Heart left ventricle (tissue), 16 donors: ENCODE measurements at regions of chr2 and their contacts with region 1.

Region 1: DNA sequence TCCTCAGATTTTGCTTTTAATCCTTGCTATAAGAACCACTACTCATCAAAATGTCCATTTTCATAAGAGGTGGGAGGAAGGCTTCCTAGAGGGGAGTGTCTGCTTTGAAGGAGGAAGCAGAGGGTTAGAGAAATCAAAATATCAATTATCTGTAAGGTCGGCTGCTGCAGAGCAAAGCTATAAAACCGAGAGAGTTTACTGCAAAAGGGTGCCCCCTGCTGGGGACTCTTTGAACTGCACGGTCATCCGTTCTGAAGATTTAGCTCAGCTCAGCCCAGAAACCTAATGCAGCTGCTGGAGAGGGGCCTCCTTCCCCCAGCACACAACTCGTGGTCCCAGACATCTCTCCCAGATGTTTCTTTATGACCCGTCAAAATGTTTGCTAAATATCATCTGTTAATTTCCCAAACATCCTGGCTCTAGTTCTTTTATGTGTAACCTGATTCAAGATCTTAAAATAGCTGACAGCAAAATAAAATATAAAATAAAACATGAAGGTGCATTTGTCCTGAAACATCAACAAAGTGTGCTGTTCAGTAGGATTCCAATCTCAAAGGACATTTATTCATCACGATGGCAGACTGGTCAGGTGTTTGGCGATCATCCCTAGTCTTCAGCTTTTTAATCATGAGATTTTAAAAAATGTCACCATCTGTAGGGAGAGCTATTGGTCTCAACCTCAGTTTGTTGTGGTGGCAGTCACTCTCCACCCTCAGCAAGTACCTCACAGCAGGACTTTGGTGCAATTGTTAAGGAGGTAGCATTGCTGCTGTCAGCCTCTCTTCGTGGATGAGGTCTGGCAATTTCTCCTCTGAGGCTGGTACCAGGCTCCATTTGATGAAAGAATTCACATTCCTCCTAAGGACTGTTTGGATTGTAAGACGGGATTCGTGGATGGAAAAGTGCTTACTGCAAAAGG is 185.9 kb downstream of the MTX2 start:
- DNase-seq: peak; percentile 71 to 85 (median 78)
- ATAC-seq: peak; percentile 42 to 55 (median 46)
- H3K4me3 ChIP-seq: no peak overlapping the region
- H3K27ac ChIP-seq: peak overlapping the region in 11 of 12 donors; percentile 11 to 61 (median 27)
- H3K4me1 ChIP-seq: peaks cover 0 to 20% (median 10%) of the 10 kb centered on the region in 12 donors
- H3K27me3 ChIP-seq: peaks cover 0 to 25% (median 0%) of the 10 kb centered on the region in 9 donors
- CTCF ChIP-seq: peak; percentile 89 to 97 (median 94)
- POLR2A ChIP-seq: no peak

Region 2: DNA sequence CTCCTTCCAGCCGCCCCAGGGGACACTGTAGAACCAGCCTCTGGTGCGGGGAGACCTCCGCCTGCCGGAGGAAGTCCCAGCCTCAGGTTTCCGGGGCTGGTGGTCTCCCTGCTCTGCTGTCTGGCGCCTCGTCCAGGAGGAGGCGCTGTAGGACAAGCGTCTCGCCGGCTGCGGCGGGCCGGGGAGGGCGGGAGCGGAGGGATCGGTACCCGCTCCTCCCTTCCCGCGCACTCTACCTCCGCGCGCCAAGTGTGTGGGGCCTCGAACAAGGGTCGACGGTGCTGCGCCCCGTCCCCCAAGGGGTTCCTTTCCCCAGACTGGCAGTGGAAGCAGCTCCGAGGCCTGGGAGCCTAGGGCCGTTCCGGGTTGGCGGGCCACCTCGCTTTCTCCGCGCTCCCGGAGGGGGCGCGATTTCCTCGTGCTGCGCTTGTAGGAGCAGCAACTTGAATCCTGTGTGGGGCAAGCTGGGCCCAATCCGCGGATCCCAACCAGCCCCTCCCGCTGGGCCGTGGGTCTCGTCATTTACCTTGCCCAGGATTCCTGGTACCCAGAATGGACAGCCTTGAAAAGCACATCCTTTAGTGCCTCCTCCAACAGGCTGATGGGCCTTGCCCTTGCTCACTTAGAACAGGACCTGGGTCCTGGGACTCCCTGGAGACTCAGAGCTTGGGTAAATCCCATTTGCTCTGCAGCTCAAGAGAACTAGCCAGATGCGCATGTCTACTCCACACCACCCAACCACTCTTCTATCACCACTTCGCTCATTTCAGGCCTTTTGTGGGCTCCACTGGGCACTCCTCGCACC is 314.4 kb before region 1 on chr2:
- intact Hi-C with region 1: loop called (anchors 1 to 5 kb)
- DNase-seq: peak; percentile 64 to 85 (median 70)
- ATAC-seq: peak; percentile 80 to 97 (median 94)
- H3K4me3 ChIP-seq: peak overlapping the region; percentile 1 to 69 (median 52)
- H3K27ac ChIP-seq: peak overlapping the region in 5 of 12 donors; percentile 32 to 68 (median 56)
- H3K4me1 ChIP-seq: peaks cover 0 to 30% (median 14%) of the 10 kb centered on the region in 12 donors
- H3K27me3 ChIP-seq: peaks cover 31 to 97% (median 66%) of the 10 kb centered on the region in 9 donors
- CTCF ChIP-seq: peak; percentile 68 to 98 (median 92)
- POLR2A ChIP-seq: no peak

Region 3: DNA sequence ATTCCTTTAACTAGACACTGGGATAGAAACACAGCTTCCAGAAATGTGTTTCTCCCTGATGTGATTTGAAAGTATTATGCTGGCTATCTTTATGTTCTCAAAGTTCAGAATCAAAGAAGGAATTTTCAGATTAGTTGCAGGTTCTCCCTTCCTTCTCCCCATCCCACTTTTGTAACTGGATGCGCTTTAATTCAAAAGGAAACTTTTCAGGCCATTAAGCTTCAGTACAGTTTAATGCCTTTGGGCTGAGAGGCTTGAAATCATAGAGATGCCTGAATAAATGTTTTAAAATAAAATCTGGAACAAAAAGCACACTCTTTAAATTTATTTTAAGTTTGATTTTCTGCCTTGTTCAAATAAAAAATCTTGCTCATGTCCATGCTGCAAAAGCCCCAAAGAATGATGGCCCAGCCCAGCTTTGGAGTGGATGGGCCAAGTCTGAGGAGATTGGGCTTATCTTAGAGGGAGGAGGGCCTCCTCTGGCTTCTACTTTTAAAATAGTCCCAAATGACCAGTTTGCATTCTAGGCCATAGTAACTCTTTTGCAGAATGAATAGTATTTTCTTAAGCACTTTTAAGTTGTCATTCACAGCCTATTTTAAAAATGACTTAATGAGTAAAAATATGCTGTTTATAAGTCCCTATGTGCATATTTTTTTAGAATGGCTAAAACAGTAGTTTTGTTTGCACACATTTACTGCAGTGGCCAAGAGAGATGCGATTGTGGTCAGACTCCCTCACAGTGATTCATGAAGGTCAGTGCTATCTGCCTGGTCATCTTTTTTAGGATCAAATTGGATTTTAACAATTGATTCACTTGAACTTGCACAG is 56.7 kb before region 1 on chr2:
- intact Hi-C with region 1: no loop called
- DNase-seq: no peak
- ATAC-seq: no peak
- H3K4me3 ChIP-seq: no peak overlapping the region
- H3K27ac ChIP-seq: no peak overlapping the region
- H3K4me1 ChIP-seq: no peaks in the 10 kb centered on the region
- H3K27me3 ChIP-seq: no peaks in the 10 kb centered on the region
- CTCF ChIP-seq: no peak
- POLR2A ChIP-seq: no peak

Region 4: GRCh38 chr2:176534798-176535466 is 79.8 kb after region 1 on chr2:
- intact Hi-C with region 1: loop called in 1 of 10 experiments (anchors 5 kb)
- DNase-seq: no peak
- ATAC-seq: peak in 2 of 4 donors; percentile 34 to 81
- H3K4me3 ChIP-seq: no peak overlapping the region
- H3K27ac ChIP-seq: no peak overlapping the region
- H3K4me1 ChIP-seq: peaks cover 0 to 2% (median 0%) of the 10 kb centered on the region in 12 donors
- H3K27me3 ChIP-seq: peaks cover 0 to 6% (median 0%) of the 10 kb centered on the region in 9 donors
- CTCF ChIP-seq: no peak
- POLR2A ChIP-seq: no peak

Region 5: DNA sequence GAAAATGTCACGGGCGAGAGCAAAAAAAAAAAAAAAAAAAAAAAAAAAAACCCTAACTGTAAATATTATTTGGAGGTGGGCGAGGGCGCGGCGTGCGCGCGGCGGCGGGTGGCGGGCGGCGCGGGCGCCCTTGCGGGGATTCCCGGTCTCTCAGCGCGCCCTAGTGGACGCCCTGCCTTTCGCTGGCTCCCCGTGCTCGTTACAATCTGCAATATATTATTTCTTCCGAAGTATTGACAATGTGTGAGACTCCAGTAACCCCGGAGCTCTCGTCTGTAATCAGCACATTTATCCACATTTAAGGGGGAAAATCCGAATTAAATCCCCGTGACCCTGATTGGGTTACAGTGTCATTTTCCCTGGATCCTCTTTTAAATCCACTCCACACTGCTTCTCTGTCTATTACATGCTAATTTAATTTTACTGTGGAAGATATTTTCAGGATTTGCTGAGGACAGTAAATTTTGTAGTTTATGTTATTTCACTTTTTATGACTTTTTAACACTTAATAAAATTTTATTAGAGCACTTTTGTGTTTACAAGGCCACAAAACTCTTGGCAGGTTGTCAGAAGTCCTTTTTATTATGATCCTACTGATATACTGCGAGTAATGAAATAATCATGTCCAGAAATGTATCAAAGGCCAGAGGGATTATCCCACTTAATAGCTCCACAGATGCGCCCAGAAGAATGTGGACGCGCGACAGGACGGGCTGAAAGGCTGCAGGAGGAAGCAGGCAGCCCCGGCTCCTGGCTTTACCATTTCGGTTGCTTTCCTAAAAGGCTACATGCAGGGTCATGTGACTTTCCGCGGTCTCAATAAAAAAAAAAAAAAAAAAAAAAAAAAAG is 183.2 kb after region 1 on chr2:
- intact Hi-C with region 1: loop called in 8 of 10 experiments (anchors 5 to 10 kb)
- DNase-seq: peak; percentile 48 to 74 (median 69)
- ATAC-seq: peak in 3 of 4 donors; percentile 79 to 95 (median 88)
- H3K4me3 ChIP-seq: peak overlapping the region; percentile 49 to 77 (median 60)
- H3K27ac ChIP-seq: peak overlapping the region in 6 of 12 donors; percentile 37 to 77 (median 58)
- H3K4me1 ChIP-seq: peaks cover 0 to 10% (median 4%) of the 10 kb centered on the region in 12 donors
- H3K27me3 ChIP-seq: peaks cover 10 to 96% (median 54%) of the 10 kb centered on the region in 9 donors
- CTCF ChIP-seq: peak; percentile 57 to 88 (median 78)
- POLR2A ChIP-seq: no peak

Region 6: DNA sequence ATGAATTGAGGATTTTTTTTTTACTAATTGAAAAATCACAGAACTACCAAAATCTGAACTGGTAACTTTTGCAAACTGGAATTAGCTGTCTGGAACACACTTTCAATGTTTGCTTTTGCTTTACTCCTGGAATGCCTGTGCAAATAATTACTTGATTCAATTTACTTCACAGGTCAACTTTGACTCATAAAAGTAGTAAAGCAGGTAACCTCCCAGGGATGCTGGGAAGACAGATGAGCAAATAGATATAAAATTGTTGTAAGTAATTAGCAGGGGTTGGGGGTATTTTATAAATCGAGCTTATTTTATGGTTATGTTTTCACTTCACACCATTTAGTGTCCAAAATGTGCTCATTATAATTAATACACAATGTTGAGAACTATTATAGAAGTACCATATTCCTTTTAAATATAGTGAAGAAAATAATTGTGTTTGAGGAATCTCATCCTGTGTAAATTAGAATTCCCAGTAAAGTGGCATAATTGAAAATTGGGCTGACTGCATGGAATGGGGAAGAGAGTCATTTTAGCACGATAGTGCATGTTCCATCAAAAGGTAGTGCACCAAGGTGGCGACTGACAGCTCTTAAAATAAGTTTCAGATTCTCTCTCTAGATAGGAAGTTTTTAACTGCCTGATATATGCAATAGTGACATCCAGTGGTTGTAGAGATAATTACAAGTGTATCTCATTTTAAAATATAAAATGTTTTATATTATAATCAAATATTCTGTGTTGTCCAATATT is 359.3 kb after region 1 on chr2:
- intact Hi-C with region 1: loop called in 1 of 10 experiments (anchors 10 kb)
- DNase-seq: no peak
- ATAC-seq: no peak
- H3K4me3 ChIP-seq: no peak overlapping the region
- H3K27ac ChIP-seq: peak overlapping the region in 1 of 12 donors; percentile 9
- H3K4me1 ChIP-seq: peaks cover 0 to 20% (median 3%) of the 10 kb centered on the region in 12 donors
- H3K27me3 ChIP-seq: peaks cover 0 to 14% (median 0%) of the 10 kb centered on the region in 9 donors
- CTCF ChIP-seq: peak; percentile 60 to 79 (median 68)
- POLR2A ChIP-seq: no peak